ENCODE measurements at regions of chr1 and their contacts with region 1.

Region 1: GRCh38 chr1:32316903-32317277 is 19.1 kb downstream of the MARCKSL1 start:
- DNase-seq: no peak
- ATAC-seq: no peak
- H3K4me3 ChIP-seq: no peak overlapping the region
- H3K27ac ChIP-seq: no peak overlapping the region
- H3K4me1 ChIP-seq: peaks cover 2% of the 10 kb centered on the region
- H3K27me3 ChIP-seq: no peaks in the 10 kb centered on the region

Region 2: GRCh38 chr1:32228771-32229170 is 88.1 kb before region 1 on chr1:
- intact Hi-C with region 1: loop called in 1 of 4 experiments (anchors 5 kb)
- DNase-seq: no peak
- ATAC-seq: no peak
- H3K4me3 ChIP-seq: no peak overlapping the region
- H3K27ac ChIP-seq: no peak overlapping the region
- H3K4me1 ChIP-seq: no peaks in the 10 kb centered on the region
- H3K27me3 ChIP-seq: no peaks in the 10 kb centered on the region

Measured in right cardiac atrium (tissue), 5 donors.